ENCODE measurements at regions of chr7 and their contacts with region 1.

Region 1: DNA sequence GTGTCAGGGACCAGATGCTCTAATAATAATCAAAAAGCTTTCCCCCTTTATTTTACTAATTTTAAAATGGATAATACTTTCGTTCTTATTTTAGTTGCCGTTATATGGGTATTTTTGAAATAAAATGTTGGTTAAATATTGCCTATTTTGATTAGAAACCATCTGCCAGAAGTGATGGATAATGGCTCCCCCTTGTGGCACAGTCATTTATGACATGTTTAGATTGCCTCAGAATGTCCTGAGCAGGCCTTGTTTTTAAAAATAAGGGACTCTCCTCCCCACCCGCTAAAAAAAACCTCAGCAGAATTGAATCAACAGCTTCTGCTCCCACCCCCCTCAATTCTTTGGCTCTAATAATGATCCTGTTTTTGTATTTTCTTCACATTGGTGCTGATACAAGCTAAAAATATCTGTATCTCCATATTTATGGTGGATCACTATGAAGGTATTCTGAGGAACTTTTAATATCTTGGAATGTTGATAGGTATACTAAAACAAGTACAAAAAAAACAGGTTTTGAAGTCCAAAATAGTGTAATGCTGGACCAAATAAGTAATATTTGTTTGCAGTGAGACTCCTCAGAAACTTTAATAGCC is 38.8 kb downstream of the TMEM60 start:
- DNase-seq: no peak
- ATAC-seq: peak; percentile 67 to 86 (median 74)
- H3K4me3 ChIP-seq: no peak overlapping the region
- H3K27ac ChIP-seq: peak overlapping the region; percentile 17
- H3K4me1 ChIP-seq: peaks cover 28% of the 10 kb centered on the region
- H3K27me3 ChIP-seq: no peaks in the 10 kb centered on the region
- CTCF ChIP-seq: peak; percentile 90

Region 2: DNA sequence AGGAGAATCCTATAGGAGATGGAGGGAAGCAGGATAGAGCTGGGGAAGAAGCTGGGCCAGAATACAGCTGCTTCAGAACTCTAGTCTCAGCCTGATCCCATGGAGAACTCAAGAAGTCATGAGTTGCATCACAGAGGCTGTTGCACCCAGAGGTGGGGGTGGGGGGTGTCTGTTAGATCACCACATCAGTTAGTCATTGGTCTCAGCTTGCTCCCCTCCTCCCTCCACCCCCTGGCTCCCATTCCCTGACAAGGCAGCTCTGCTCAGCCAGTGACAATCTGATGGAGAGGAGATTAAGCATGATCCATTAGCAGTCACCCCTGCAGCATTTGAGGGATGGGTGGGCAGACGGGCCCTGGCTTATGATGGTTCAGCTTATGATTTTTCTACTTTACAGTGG is 501.4 kb before region 1 on chr7:
- intact Hi-C with region 1: loop called in 1 of 2 experiments (anchors 10 kb)
- DNase-seq: no peak
- ATAC-seq: no peak
- H3K4me3 ChIP-seq: no peak overlapping the region
- H3K27ac ChIP-seq: no peak overlapping the region
- H3K4me1 ChIP-seq: no peaks in the 10 kb centered on the region
- H3K27me3 ChIP-seq: no peaks in the 10 kb centered on the region
- CTCF ChIP-seq: no peak

Region 3: DNA sequence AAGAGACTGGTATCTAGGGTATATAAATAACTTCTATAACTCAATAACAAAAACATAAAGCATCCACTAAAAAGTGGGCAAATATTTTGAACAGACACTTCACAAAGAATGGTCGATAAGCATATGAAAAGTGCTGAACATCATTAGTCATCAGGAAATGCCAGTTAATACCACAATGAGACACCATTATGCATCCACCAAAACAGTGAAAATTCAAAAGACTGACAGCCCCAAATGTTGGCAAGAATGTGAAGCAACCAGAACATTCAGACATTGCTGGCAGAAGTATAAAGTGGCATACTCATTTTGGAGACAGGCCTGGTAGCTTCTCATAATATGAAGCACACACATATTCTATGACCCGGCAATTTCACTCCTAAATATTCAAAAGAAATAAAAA is 316.8 kb before region 1 on chr7:
- intact Hi-C with region 1: loop called in 1 of 2 experiments (anchors 10 kb)
- DNase-seq: no peak
- ATAC-seq: no peak
- H3K4me3 ChIP-seq: no peak overlapping the region
- H3K27ac ChIP-seq: no peak overlapping the region
- H3K4me1 ChIP-seq: no peaks in the 10 kb centered on the region
- H3K27me3 ChIP-seq: no peaks in the 10 kb centered on the region
- CTCF ChIP-seq: no peak

Region 4: DNA sequence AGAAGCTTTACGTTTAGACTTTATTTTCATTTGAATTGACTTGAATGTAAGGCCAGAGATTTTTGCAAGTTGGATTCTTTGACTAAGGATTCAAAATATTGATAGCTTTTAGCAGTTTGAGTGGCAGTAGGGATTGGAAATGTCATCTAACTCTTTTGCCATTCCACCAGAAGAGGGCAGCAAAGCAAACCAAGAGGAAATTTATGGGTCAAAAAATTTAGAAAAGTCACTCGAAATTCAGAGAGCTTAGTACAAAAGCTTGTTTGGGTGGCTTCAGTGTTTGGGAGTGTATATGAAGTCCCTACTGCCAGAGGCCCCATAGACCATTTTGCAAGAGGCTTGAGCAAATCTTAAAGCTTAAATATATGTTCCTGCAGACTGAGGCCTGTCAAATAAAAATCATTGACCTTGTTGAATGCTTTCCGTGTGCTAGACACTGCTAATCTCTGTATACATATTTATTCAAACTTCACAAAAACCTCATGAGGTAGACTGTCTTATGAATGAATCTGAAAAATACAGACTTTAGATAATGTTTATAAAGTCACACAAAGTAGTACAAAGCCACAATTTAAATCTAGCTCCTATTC is 107.7 kb before region 1 on chr7:
- intact Hi-C with region 1: loop called in 1 of 2 experiments (anchors 1 kb)
- DNase-seq: no peak
- ATAC-seq: peak in 2 of 4 donors; percentile 39 to 68
- H3K4me3 ChIP-seq: no peak overlapping the region
- H3K27ac ChIP-seq: no peak overlapping the region
- H3K4me1 ChIP-seq: no peaks in the 10 kb centered on the region
- H3K27me3 ChIP-seq: no peaks in the 10 kb centered on the region
- CTCF ChIP-seq: peak; percentile 74

Region 5: GRCh38 chr7:77657427-77658224 is 101.8 kb before region 1 on chr7:
- intact Hi-C with region 1: loop called in 1 of 2 experiments (anchors 2 kb)
- DNase-seq: no peak
- ATAC-seq: peak in 2 of 4 donors; percentile 69 to 83
- H3K4me3 ChIP-seq: no peak overlapping the region
- H3K27ac ChIP-seq: no peak overlapping the region
- H3K4me1 ChIP-seq: no peaks in the 10 kb centered on the region
- H3K27me3 ChIP-seq: no peaks in the 10 kb centered on the region
- CTCF ChIP-seq: peak; percentile 59